ENCODE measurements at regions of chr18 and their contacts with region 1.

Region 1: DNA sequence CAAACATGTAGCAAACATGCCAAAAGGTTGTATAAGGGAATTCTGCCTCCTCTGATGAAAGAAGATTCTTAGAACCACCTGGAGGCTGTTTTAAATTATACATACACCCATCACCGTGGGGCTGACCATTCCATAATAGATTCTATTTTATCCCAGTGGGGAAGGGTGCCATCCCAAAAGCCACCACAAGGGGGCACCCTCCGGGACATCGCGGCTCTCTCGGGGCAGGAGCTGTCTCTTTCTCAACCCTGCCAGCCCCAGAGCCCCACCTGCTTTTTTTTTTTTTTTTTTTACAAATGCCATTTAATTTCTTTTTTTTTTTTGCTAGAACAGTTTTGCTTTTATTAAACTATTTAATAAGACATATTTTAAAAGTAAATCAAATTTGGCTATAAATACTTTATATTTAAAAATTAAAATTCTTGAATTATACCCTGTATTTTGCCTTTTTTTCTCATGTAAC is 8.6 kb upstream of the MTCL1 start:
- DNase-seq: peak; percentile 84
- ATAC-seq: peak; percentile 89
- H3K4me3 Mint-ChIP-seq: no peak overlapping the region
- H3K27ac Mint-ChIP-seq: no peak overlapping the region
- H3K4me1 Mint-ChIP-seq: no peaks in the 10 kb centered on the region
- H3K27me3 Mint-ChIP-seq: peaks cover 13% of the 10 kb centered on the region

Region 2: DNA sequence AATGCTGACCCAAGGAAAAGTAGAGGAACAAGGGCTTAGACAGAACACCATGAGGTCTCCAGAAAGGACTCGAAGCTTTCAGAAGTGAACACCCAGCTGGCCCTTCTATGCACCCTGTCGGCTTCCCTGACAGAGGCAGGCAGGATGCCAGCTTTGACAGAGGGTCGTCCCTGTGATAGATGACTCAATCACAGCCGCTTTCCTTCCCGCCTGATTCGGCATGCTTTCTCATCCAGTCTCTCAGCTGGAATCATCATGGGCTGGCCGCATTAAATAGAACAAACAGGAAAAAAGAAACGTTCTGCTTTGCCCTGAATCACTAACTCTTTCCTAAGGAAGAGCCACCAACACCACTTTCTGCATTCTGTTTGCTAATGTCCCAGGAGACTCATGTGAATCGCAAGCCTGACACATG is 227.9 kb before region 1 on chr18:
- CTCF ChIA-PET with region 1: no interaction called
- POLR2A ChIA-PET with region 1: no interaction called
- intact Hi-C with region 1: no loop called
- DNase-seq: no peak
- ATAC-seq: no peak
- H3K4me3 Mint-ChIP-seq: no peak overlapping the region
- H3K27ac Mint-ChIP-seq: no peak overlapping the region
- H3K4me1 Mint-ChIP-seq: no peaks in the 10 kb centered on the region
- H3K27me3 Mint-ChIP-seq: no peaks in the 10 kb centered on the region

Region 3: GRCh38 chr18:8601277-8602032 is 95.3 kb before region 1 on chr18:
- CTCF ChIA-PET with region 1: no interaction called
- POLR2A ChIA-PET with region 1: no interaction called
- intact Hi-C with region 1: no loop called
- DNase-seq: no peak
- ATAC-seq: no peak
- H3K4me3 Mint-ChIP-seq: no peak overlapping the region
- H3K27ac Mint-ChIP-seq: no peak overlapping the region
- H3K4me1 Mint-ChIP-seq: peaks cover 4% of the 10 kb centered on the region
- H3K27me3 Mint-ChIP-seq: peaks cover 10% of the 10 kb centered on the region

Region 4: GRCh38 chr18:8654503-8655451 is 42.0 kb before region 1 on chr18:
- CTCF ChIA-PET with region 1: interaction called, 4 read pairs
- POLR2A ChIA-PET with region 1: no interaction called
- intact Hi-C with region 1: loop called in 1 of 2 experiments (anchors 5 kb)
- DNase-seq: no peak
- ATAC-seq: no peak
- H3K4me3 Mint-ChIP-seq: no peak overlapping the region
- H3K27ac Mint-ChIP-seq: no peak overlapping the region
- H3K4me1 Mint-ChIP-seq: no peaks in the 10 kb centered on the region
- H3K27me3 Mint-ChIP-seq: peaks cover 10% of the 10 kb centered on the region

Region 5: GRCh38 chr18:8982416-8983184 is 285.8 kb after region 1 on chr18:
- CTCF ChIA-PET with region 1: interaction called, 30 read pairs
- POLR2A ChIA-PET with region 1: no interaction called
- intact Hi-C with region 1: no loop called
- DNase-seq: peak; percentile 26
- ATAC-seq: no peak
- H3K4me3 Mint-ChIP-seq: no peak overlapping the region
- H3K27ac Mint-ChIP-seq: no peak overlapping the region
- H3K4me1 Mint-ChIP-seq: no peaks in the 10 kb centered on the region
- H3K27me3 Mint-ChIP-seq: peaks cover 5% of the 10 kb centered on the region

Region 6: DNA sequence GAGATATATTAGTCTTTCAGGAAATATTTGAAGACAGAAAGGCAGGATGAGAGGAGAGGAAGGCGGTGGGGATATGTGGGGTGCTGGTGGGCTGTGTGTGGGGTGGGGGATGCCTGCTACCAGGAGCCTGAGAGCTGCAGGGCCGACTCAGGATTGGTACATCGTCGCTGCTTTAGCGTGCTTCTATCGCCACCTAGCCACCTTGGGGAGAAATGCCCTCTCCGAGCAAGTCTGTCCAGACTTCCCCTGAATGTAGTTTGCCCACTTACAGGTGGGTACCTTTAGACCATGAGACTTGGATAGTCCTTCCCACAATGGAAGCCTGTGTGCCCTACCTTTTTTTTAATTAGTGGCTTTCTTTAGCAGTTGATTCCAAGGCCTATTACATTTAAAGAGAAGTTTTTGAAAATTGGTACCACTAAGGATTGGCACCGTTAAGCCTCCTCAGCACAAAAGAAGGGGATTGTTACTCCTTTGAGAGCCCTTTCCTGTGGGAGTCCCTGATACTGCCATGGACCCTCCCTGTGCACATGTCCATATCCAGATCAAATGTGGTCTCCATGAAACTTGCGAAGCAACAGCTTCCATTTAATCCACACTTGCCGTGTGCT is 291.6 kb after region 1 on chr18:
- CTCF ChIA-PET with region 1: interaction called, 30 read pairs
- POLR2A ChIA-PET with region 1: no interaction called
- intact Hi-C with region 1: loop called (anchors 1 kb)
- DNase-seq: peak; percentile 72
- ATAC-seq: peak; percentile 87
- H3K4me3 Mint-ChIP-seq: no peak overlapping the region
- H3K27ac Mint-ChIP-seq: no peak overlapping the region
- H3K4me1 Mint-ChIP-seq: no peaks in the 10 kb centered on the region
- H3K27me3 Mint-ChIP-seq: peaks cover 13% of the 10 kb centered on the region

Region 7: DNA sequence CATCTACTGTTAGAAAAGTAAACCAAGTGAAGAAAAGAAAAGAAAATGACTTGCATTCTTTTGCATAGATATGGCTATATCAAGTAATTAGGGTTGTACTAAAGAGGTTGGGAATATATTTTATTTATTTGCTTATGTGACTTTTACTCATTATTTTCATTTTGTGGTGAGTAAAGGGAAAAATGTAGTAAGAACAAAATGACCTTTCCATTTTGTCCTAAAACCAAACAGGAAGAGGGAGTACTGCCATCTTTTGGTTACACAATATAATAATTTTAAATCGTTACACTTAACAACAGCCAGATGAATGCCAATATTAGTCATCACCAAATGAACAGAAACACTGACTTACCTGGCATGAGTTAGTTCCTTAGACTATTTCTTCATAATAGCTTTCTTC is 358.4 kb after region 1 on chr18:
- CTCF ChIA-PET with region 1: no interaction called
- POLR2A ChIA-PET with region 1: no interaction called
- intact Hi-C with region 1: loop called in 1 of 2 experiments (anchors 1 kb)
- DNase-seq: no peak
- ATAC-seq: peak; percentile 64
- H3K4me3 Mint-ChIP-seq: no peak overlapping the region
- H3K27ac Mint-ChIP-seq: no peak overlapping the region
- H3K4me1 Mint-ChIP-seq: peaks cover 2% of the 10 kb centered on the region
- H3K27me3 Mint-ChIP-seq: peaks cover 1% of the 10 kb centered on the region

Measured in activated CD4-positive, alpha-beta T cell treated with anti-CD3 and anti-CD28 coated beads for 36 hours (primary cell).